ENCODE measurements at regions of chr16 and their contacts with region 1.

Region 1: DNA sequence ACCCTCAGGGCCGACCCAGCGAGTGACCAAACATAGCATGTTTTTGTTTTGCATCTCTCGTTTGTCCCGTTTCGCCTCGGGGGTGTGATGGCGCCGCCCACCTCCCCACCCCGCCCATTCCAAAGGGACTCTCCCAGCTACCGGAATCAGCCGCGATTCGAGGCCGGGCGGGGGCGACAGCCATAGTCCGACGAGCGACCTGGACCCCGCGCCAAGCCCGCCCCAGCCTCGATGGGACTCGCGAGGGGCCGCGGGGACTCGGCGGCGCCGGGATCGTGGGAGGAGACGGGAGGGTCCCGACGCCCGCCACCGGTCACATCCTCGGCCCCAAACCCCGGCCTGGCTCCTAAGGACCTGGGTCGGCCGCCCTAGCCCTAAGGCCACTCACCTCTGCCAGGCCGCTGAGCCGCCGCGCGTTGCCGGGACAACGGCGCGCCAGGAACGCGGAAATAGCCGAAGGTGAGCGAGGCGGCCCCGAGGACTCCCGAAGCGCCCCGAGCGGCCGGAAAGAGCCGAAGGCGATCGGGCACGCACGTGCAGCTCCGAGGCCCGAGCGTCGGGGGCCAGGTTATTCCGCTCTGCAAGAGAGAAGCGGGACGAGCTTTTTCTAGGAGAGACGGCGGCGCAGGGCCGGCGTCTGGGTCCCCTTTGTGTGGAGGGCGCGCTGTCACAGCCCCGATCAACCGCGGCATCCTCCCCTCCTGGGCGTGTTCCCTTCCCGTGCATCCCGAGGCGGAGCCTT is 1.4 kb downstream of the IFT140 start:
- DNase-seq: peak; percentile 92 to 97
- ATAC-seq: peak; percentile 91
- H3K4me3 ChIP-seq: peak overlapping the region; percentile 49 to 50
- H3K27ac ChIP-seq: peak overlapping the region in 1 of 2 donors; percentile 58
- H3K4me1 ChIP-seq: peaks cover 2 to 7% of the 10 kb centered on the region in 2 donors
- H3K27me3 ChIP-seq: no peaks in the 10 kb centered on the region

Region 2: GRCh38 chr16:1474796-1475551 is 135.5 kb before region 1 on chr16 and contains the start of gene CLCN7:
- intact Hi-C with region 1: loop called in 1 of 2 experiments (anchors 5 kb)
- DNase-seq: peak; percentile 95 to 97
- ATAC-seq: peak; percentile 95
- H3K4me3 ChIP-seq: peak within 1 kb of the TSS; percentile 72 to 78
- H3K27ac ChIP-seq: peak within 1 kb of the TSS in 1 of 2 donors; percentile 14
- H3K4me1 ChIP-seq: no peaks in the 10 kb centered on the region
- H3K27me3 ChIP-seq: no peaks in the 10 kb centered on the region
- total RNA-seq, gene CLCN7: 44.8 to 89.1 TPM

Region 3: DNA sequence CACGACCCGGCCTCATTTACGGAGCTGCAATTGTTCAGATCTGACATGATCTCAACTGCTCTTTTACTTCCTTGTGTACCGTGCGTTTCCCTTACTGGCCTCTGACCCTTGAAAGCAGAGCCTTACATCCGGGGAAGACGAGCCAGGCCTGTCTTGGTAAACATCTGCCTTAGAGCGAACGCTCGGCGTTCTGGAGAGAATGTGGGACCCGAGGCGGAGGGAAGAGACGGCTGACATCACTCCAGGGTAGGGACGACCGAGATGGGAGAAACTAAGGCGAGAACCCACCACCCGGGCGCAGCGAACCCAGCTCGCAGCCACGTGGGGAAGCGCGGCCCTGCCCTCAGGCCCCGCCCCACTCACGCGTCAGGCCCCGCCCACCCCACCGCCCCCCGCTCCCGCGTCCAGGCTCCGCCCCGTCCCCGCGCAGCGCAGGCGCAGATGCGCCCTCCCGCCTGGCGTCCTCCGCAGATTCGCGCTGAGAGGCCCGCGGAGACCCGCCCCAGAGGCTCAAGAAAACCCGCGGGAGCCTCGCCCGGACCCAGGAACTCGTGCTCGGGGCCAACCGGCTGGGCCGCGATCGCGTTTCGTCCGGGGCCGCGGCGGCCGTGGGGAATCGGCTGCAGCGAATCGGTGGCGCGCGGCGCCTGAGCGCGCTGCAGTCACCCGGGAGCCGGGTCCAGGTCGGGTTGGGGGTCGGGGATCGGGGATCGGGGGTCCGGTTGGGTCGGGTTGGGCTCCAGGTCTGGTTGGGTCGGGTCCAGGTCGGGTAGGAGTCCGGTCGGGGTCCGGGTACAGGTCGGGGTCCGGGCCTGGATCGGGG is 117.3 kb before region 1 on chr16 and contains the start of gene TELO2:
- intact Hi-C with region 1: loop called (anchors 1 to 10 kb)
- DNase-seq: peak; percentile 87 to 95
- ATAC-seq: peak; percentile 91
- H3K4me3 ChIP-seq: peak within 1 kb of the TSS; percentile 66 to 74
- H3K27ac ChIP-seq: peak within 1 kb of the TSS in 1 of 2 donors; percentile 22
- H3K4me1 ChIP-seq: no peaks in the 10 kb centered on the region
- H3K27me3 ChIP-seq: no peaks in the 10 kb centered on the region
- total RNA-seq, gene TELO2: 25.6 to 28.2 TPM

Region 4: DNA sequence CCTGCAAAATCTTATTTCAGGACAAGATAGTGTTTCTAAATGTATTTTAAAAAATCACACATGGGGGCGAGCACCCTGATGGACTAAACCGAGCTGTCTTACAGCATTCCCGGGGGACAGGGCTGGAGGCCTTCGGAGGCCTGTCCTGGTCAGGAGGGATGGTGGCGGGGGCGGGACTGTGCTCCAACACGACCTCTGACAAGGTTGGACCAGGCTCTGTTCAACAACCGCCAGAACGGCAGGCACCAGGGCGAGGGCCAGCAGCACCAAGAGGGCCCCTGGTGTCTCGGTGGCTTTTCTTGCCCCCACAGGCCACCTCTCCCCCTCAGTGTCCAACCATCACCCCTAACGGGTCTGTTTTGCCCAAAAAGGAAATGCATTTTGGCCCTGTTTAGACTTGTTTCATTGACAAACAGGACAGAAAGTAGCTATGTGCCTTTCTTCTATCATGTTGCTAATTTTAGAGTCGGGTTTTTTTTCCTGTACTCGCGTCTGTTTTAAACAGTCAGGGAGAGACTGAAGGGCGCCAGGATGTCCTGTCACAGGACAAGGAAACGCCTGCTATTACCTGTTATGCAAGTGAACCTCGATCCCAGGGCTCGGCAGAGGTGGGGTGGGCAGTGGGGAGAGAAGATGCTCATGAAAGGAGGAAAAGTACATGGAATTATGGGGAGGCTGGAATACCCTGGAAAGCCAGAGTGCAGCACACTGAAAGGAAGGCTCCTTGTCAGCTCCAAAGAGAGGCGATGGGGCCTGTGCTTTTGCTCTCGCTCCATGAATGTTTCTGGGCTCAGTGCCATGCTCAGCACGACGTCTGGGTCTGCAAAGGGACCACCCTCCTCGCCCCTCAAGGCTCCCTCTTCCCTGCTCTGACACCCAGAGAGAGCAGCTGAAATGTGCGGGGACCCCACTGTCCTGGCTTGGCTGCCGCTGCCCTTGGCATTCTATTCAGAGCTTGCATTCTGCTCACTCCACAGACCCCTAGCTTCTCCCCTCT is 65.1 kb before region 1 on chr16:
- intact Hi-C with region 1: loop called in 1 of 2 experiments (anchors 5 kb)
- DNase-seq: no peak
- ATAC-seq: peak; percentile 44
- H3K4me3 ChIP-seq: no peak overlapping the region
- H3K27ac ChIP-seq: peak overlapping the region; percentile 74 to 77
- H3K4me1 ChIP-seq: peaks cover 0 to 2% of the 10 kb centered on the region in 2 donors
- H3K27me3 ChIP-seq: no peaks in the 10 kb centered on the region

Region 5: GRCh38 chr16:1579201-1579600 is 31.2 kb before region 1 on chr16:
- intact Hi-C with region 1: no loop called
- DNase-seq: no peak
- ATAC-seq: no peak
- H3K4me3 ChIP-seq: no peak overlapping the region
- H3K27ac ChIP-seq: no peak overlapping the region
- H3K4me1 ChIP-seq: no peaks in the 10 kb centered on the region
- H3K27me3 ChIP-seq: no peaks in the 10 kb centered on the region

Region 6: DNA sequence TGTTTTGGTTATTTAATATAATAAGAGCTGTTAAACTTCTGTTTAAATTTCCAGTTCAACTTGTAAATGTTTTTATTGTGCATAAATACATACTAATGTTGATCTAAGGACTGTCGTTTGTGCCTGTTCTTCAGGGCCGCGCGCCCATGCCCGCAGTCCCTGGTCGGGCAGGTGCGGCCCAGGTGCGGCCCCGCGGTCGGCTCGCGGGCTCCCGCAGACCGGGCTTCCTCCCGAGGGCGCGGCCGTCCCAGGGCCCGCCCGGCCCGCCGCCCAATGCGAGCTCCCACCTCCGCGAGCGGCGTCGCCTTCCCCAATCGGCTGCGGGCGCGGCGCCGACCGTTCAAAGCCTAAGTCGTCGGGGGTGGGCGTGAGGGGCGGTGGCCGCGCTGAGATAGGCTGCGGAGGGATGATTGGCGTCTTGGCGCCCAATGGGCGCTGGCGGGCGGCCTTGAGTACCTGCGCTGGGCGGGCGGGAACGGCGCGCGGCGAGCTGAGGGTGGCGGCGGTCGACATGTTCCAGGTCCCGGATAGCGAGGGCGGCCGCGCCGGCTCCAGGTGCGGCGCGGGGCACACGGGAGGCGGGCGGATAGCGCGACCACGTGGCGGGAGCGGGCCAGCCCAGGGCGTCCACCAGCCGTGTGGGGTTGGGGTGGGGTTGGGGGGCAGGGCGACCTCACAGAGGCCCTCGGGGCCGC is 67.5 kb after region 1 on chr16 and contains the start of gene JPT2:
- intact Hi-C with region 1: loop called in 1 of 2 experiments (anchors 10 kb)
- DNase-seq: peak; percentile 97 to 98
- ATAC-seq: peak; percentile 96
- H3K4me3 ChIP-seq: peak within 1 kb of the TSS; percentile 64 to 67
- H3K27ac ChIP-seq: no peak within 1 kb of the TSS
- H3K4me1 ChIP-seq: no peaks in the 10 kb centered on the region
- H3K27me3 ChIP-seq: no peaks in the 10 kb centered on the region
- total RNA-seq, gene JPT2: 28.3 to 30.8 TPM

Region 7: GRCh38 chr16:1705688-1706385 is 95.4 kb after region 1 on chr16 and contains the start of gene MAPK8IP3:
- intact Hi-C with region 1: loop called in 1 of 2 experiments (anchors 10 kb)
- DNase-seq: peak; percentile 93 to 97
- ATAC-seq: peak; percentile 96
- H3K4me3 ChIP-seq: peak within 1 kb of the TSS; percentile 65 to 71
- H3K27ac ChIP-seq: peak within 1 kb of the TSS in 1 of 2 donors; percentile 92
- H3K4me1 ChIP-seq: no peaks in the 10 kb centered on the region
- H3K27me3 ChIP-seq: no peaks in the 10 kb centered on the region
- total RNA-seq, gene MAPK8IP3: 69.0 to 122 TPM

Measured in aorta (tissue), 5 donors.